ENCODE measurements at regions of chr21 and their contacts with region 1.

Region 1: GRCh38 chr21:32371913-32372314 is 20.9 kb downstream of the URB1 start:
- DNase-seq: peak; percentile 86
- H3K4me3 ChIP-seq: no peak overlapping the region
- H3K27ac ChIP-seq: peak overlapping the region; percentile 85 to 91
- H3K4me1 ChIP-seq: peaks cover 28% of the 10 kb centered on the region
- H3K27me3 ChIP-seq: no peaks in the 10 kb centered on the region
- CTCF ChIP-seq: no peak
- POLR2A ChIP-seq: peak; percentile 52

Region 2: DNA sequence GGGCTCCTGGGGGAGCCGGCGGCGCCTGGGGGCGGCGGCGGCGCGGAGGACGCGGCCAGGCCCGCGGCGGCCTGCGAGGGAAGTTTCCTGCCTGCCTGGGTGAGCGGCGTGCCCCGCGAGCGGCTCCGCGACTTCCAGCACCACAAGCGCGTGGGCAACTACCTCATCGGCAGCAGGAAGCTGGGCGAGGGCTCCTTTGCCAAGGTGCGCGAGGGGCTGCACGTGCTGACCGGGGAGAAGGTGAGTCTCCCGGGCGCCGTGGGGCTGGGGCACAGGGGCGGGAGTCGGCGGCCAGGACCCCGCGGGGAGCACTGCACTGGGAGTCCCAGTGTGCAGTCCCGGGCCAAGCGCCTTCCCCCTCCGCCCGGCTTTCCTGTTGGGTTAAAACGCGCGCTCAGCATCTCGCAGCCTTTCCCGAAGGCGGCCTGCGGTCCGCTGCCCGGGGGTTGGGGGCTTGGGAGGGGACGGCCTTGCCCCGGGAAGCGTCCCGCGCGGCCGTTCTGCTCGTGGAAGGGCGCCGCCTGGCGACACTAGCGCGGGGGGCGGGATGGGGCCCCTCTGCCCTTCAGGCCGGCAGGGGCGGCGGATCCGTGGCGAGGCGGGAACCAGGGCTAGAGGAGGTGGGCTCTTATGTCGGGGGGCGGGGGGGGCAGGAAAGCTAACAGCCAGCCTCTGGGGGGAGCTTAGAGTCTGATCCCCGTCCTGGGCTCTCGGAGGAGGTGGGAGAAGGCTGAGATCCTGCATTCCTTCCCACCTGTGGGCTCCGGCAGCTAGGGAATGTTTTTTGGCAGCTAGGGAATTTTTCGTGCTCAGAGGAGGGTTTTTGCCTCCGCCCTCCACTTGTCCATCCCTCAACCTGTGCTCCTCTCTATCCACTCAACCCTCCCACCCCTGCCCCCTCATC is 498.0 kb before region 1 on chr21:
- intact Hi-C with region 1: no loop called
- DNase-seq: peak; percentile 10
- H3K4me3 ChIP-seq: peak overlapping the region; percentile 48 to 50
- H3K27ac ChIP-seq: no peak overlapping the region
- H3K4me1 ChIP-seq: no peaks in the 10 kb centered on the region
- H3K27me3 ChIP-seq: no peaks in the 10 kb centered on the region
- CTCF ChIP-seq: peak; percentile 43 to 55 (median 49)
- POLR2A ChIP-seq: no peak

Region 3: DNA sequence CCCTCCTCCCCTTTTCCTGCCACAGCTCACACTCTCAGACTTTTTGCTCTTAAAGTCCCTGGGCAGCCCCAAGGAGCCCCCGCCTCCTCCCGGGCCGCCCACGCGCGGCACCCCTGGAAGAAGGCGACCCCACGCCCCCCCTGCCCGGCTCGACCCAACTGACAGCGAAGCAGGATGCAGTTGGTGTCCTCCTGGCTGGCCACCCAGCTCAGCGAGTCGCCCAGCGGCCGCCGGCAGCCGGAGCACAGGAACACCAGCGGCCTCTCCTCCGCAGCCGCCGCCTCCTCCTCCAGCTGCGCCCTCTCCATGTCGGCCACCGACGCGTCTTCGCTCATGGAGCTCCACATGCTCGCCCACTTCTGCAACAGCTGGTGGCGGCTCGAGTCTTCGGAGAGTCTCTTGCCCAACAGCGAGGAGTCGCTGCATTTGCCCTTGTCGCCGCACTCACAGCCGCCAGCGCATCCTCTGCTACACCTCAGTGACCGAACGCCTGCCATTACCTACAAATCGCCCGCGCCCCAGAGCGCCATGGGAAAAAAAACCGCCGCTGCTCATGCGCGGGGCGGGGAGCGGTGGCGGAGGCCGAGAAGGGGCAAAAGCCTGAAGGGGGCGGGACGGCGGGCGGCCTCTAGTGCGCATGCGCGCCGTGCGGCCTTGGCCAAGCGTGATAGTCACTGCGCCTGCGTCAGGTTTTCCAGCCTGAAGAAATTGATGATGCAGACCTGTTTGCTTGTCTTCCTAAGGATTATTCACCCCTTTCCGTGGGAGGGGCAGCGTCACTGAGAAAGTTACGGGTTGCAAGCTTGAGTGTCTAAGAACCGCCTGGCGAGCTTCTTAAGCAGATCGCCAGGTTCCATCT is 93.2 kb before region 1 on chr21 and contains the start of gene MIS18A:
- intact Hi-C with region 1: loop called (anchors 10 kb)
- DNase-seq: peak; percentile 91
- H3K4me3 ChIP-seq: peak within 1 kb of the TSS; percentile 72 to 74
- H3K27ac ChIP-seq: peak within 1 kb of the TSS; percentile 60 to 71
- H3K4me1 ChIP-seq: peaks cover 15% of the 10 kb centered on the region
- H3K27me3 ChIP-seq: no peaks in the 10 kb centered on the region
- CTCF ChIP-seq: peak in 3 of 4 experiments; percentile 10 to 50 (median 40)
- POLR2A ChIP-seq: peak; percentile 80
- total RNA-seq, gene MIS18A: 10.7 to 17.8 TPM

Region 4: GRCh38 chr21:32329331-32329730 is 42.6 kb before region 1 on chr21:
- intact Hi-C with region 1: loop called (anchors 5 kb)
- DNase-seq: no peak
- H3K4me3 ChIP-seq: no peak overlapping the region
- H3K27ac ChIP-seq: peak overlapping the region; percentile 38 to 46
- H3K4me1 ChIP-seq: no peaks in the 10 kb centered on the region
- H3K27me3 ChIP-seq: no peaks in the 10 kb centered on the region
- CTCF ChIP-seq: no peak
- POLR2A ChIP-seq: no peak

Region 5: DNA sequence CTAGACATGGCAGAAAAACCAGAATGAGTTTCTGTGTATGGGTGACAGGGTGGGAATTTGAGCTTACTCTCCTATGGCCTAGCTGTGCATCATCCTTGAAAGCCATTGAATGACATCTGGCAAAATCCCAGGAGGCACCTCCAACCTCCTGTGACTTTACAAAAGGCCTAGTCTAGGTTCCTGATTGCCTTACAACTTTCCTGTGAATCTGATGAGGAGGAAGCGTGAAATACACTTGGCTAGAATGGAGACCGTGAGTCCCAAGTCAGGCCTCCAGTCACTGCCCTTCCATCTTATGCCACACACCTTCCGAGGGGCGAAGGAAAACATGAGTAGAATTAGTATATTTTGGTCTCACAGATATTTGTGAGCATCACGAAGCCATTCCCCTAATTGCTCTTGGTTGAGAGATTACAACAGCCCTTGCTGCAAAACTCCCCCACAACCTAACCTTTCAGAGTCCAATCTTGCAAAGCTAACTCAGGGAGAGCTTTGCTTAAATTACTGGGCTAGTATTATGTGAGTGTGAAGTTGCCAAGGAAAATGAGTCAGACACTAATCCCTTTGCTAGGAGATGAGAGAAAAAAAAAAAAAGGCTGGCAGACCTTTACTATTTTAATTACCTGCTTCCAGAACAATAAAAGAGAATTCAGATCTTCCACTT is 435.9 kb after region 1 on chr21:
- intact Hi-C with region 1: loop called (anchors 10 kb)
- DNase-seq: no peak
- H3K4me3 ChIP-seq: no peak overlapping the region
- H3K27ac ChIP-seq: no peak overlapping the region
- H3K4me1 ChIP-seq: no peaks in the 10 kb centered on the region
- H3K27me3 ChIP-seq: no peaks in the 10 kb centered on the region
- CTCF ChIP-seq: no peak
- POLR2A ChIP-seq: no peak

Measured in prostate gland (tissue), 2 donors.